Gastrocnemius medialis (tissue), 4 donors: ENCODE measurements at regions of chr9 and their contacts with region 1.

Region 1: GRCh38 chr9:93682232-93682968 is 106.0 kb downstream of the PHF2 start:
- DNase-seq: peak in 1 of 2 donors; percentile 22
- ATAC-seq: peak in 1 of 2 donors; percentile 40
- H3K4me3 ChIP-seq: no peak overlapping the region
- H3K27ac ChIP-seq: no peak overlapping the region
- H3K4me1 ChIP-seq: no peaks in the 10 kb centered on the region
- H3K27me3 ChIP-seq: no peaks in the 10 kb centered on the region
- CTCF ChIP-seq: peak; percentile 49 to 76 (median 74)
- POLR2A ChIP-seq: no peak

Region 2: GRCh38 chr9:93464395-93464794 is 218.0 kb before region 1 on chr9:
- in situ Hi-C with region 1: no loop called
- intact Hi-C with region 1: no loop called
- DNase-seq: no peak
- ATAC-seq: no peak
- H3K4me3 ChIP-seq: no peak overlapping the region
- H3K27ac ChIP-seq: peak overlapping the region in 2 of 4 donors; percentile 5 to 59
- H3K4me1 ChIP-seq: peaks cover 70 to 76% of the 10 kb centered on the region in 2 donors
- H3K27me3 ChIP-seq: no peaks in the 10 kb centered on the region
- CTCF ChIP-seq: no peak
- POLR2A ChIP-seq: no peak

Region 3: GRCh38 chr9:93962561-93963440 is 280.4 kb after region 1 on chr9:
- in situ Hi-C with region 1: loop called in 3 of 4 experiments (anchors 5 to 10 kb)
- intact Hi-C with region 1: no loop called
- DNase-seq: peak; percentile 57 to 59
- ATAC-seq: peak; percentile 74 to 90
- H3K4me3 ChIP-seq: no peak overlapping the region
- H3K27ac ChIP-seq: no peak overlapping the region
- H3K4me1 ChIP-seq: peaks cover 14 to 15% of the 10 kb centered on the region in 2 donors
- H3K27me3 ChIP-seq: peaks cover 35 to 38% (median 36%) of the 10 kb centered on the region in 3 donors
- CTCF ChIP-seq: peak; percentile 64 to 85 (median 73)
- POLR2A ChIP-seq: no peak